ENCODE measurements at regions of chr1 and their contacts with region 1.

Region 1: GRCh38 chr1:153572569-153573015 is 6.9 kb upstream of the S100A2 start:
- DNase-seq: peak in 3 of 5 donors; percentile 6 to 59 (median 19)
- H3K4me3 ChIP-seq: no peak overlapping the region
- H3K4me3 Mint-ChIP-seq: no peak overlapping the region
- H3K27ac ChIP-seq: no peak overlapping the region
- H3K27ac Mint-ChIP-seq: peak overlapping the region in 1 of 8 donors; percentile 28
- H3K4me1 ChIP-seq: peaks cover 5% of the 10 kb centered on the region
- H3K4me1 Mint-ChIP-seq: peaks cover 11 to 17% (median 15%) of the 10 kb centered on the region in 3 donors
- H3K27me3 ChIP-seq: no peaks in the 10 kb centered on the region
- H3K27me3 Mint-ChIP-seq: peaks cover 2 to 27% of the 10 kb centered on the region in 2 donors

Region 2: DNA sequence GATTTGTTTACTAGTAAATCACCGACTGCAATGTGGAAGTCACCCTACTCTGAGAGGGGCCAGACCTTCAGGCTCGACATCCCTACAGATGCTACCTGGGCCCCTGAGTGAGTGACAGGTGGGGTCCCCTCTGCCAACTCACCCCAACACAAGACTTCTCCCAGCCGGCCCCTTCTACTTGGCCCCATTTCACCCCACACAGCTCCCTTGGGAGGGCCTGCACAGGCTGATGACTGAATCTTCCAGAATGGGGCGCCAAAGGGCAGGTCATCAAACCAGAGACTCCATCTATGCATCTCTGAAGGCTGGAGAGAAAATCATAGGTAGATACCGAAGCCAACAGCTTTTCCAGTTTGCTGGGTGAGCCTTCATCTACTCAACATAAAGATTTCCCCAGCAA is 172.3 kb before region 1 on chr1:
- CTCF ChIA-PET with region 1: no interaction called
- POLR2A ChIA-PET with region 1: no interaction called
- DNase-seq: no peak
- H3K4me3 ChIP-seq: no peak overlapping the region
- H3K4me3 Mint-ChIP-seq: no peak overlapping the region
- H3K27ac ChIP-seq: no peak overlapping the region
- H3K27ac Mint-ChIP-seq: no peak overlapping the region
- H3K4me1 ChIP-seq: no peaks in the 10 kb centered on the region
- H3K4me1 Mint-ChIP-seq: peaks cover 3 to 5% (median 3%) of the 10 kb centered on the region in 3 donors
- H3K27me3 ChIP-seq: no peaks in the 10 kb centered on the region
- H3K27me3 Mint-ChIP-seq: peaks cover 25 to 30% of the 10 kb centered on the region in 2 donors

Region 3: DNA sequence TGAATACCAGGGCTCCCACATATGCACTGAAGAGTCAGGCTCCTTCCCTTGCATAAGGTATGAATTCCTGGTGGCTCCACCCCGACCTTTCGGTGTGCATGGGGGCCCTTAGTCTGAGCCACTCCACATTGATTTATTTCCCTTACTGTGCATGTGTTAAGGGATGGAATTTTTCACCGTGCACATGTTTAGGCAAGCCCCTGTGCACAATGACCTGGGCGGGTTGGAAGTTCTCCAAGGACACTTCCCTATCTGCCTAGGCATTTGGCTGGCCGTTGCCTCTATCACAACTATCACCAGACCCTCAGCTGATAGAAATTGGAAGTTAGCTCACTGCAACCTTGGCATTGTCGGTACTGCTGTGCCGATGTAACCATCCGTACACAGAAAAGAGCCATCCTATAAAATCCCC is 46.5 kb before region 1 on chr1:
- CTCF ChIA-PET with region 1: interaction called, 125 read pairs
- POLR2A ChIA-PET with region 1: no interaction called
- DNase-seq: peak in 1 of 5 donors; percentile 19
- H3K4me3 ChIP-seq: no peak overlapping the region
- H3K4me3 Mint-ChIP-seq: no peak overlapping the region
- H3K27ac ChIP-seq: no peak overlapping the region
- H3K27ac Mint-ChIP-seq: peak overlapping the region in 1 of 8 donors; percentile 17
- H3K4me1 ChIP-seq: peaks cover 4% of the 10 kb centered on the region
- H3K4me1 Mint-ChIP-seq: peaks cover 16 to 19% (median 16%) of the 10 kb centered on the region in 3 donors
- H3K27me3 ChIP-seq: no peaks in the 10 kb centered on the region
- H3K27me3 Mint-ChIP-seq: no peaks in the 10 kb centered on the region

Region 4: DNA sequence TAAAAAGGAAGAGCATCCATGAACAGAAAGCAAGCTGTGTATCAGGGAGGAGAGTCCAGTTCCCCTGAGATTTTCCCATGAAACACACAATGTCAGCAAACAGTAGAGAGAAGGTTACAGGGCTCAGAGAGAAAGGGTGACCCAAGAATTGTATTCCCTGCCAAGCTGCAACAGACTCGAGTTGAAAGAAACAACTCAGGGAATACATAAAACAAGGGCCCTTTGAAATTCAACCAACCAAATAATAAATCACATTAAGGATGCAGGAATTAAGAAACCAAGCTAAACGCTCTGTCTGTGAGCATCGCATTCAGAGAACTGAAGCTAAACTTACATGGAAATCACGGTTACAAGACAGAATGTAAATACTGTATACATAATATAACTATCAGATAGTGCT is 20.2 kb after region 1 on chr1:
- CTCF ChIA-PET with region 1: no interaction called
- POLR2A ChIA-PET with region 1: no interaction called
- DNase-seq: no peak
- H3K4me3 ChIP-seq: no peak overlapping the region
- H3K4me3 Mint-ChIP-seq: no peak overlapping the region
- H3K27ac ChIP-seq: no peak overlapping the region
- H3K27ac Mint-ChIP-seq: no peak overlapping the region
- H3K4me1 ChIP-seq: no peaks in the 10 kb centered on the region
- H3K4me1 Mint-ChIP-seq: no peaks in the 10 kb centered on the region
- H3K27me3 ChIP-seq: no peaks in the 10 kb centered on the region
- H3K27me3 Mint-ChIP-seq: no peaks in the 10 kb centered on the region